ENCODE measurements at regions of chr9 and their contacts with region 1.

Region 1: DNA sequence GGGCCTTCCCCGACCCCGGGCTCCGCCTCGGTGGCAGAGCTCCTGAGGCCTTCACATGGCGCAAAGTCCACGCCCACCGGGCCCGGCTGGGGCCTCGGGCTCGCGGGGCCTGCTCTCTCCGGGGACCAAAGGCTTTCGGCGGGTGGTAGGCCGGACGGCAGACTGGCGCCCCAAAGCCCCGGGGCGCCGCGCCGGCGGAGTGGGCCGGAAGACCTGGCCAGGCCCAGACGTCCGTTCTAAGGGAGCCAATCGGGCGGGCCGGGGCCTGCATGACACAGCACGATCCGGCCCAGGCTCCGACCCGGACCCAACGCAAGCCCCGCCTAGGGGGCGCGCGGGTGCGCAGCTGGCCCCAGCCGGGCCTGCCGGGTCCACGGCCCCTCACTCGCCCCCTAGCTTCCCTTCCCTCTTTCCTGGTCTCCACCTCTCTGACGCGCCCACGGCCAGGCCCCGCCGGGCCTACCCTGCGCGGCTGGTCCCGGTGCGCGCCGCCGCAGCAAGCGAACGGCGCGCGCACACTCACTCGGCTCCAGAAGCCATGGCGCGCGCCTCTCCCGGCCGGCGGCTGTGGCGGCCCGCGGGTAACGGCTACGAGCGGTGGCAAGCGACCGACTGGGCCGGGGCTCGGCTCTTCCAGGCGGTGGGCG is 488 bp downstream of the VCP start:
- H3K4me3 ChIP-seq: peak overlapping the region; percentile 84
- H3K27ac ChIP-seq: peak overlapping the region; percentile 96
- H3K4me1 ChIP-seq: peaks cover 3% of the 10 kb centered on the region; the same call in 1 of the 2 replicates
- CTCF ChIP-seq: peak; percentile 79; the same call in 1 of the 2 replicates

Region 2: GRCh38 chr9:35051069-35051967 is 20.6 kb before region 1 on chr9:
- CTCF ChIA-PET with region 1: interaction called, 18 read pairs
- POLR2A ChIA-PET with region 1: interaction called, 18 read pairs
- H3K4me3 ChIP-seq: no peak overlapping the region
- H3K27ac ChIP-seq: no peak overlapping the region
- H3K4me1 ChIP-seq: no peaks in the 10 kb centered on the region
- CTCF ChIP-seq: no peak

Region 3: DNA sequence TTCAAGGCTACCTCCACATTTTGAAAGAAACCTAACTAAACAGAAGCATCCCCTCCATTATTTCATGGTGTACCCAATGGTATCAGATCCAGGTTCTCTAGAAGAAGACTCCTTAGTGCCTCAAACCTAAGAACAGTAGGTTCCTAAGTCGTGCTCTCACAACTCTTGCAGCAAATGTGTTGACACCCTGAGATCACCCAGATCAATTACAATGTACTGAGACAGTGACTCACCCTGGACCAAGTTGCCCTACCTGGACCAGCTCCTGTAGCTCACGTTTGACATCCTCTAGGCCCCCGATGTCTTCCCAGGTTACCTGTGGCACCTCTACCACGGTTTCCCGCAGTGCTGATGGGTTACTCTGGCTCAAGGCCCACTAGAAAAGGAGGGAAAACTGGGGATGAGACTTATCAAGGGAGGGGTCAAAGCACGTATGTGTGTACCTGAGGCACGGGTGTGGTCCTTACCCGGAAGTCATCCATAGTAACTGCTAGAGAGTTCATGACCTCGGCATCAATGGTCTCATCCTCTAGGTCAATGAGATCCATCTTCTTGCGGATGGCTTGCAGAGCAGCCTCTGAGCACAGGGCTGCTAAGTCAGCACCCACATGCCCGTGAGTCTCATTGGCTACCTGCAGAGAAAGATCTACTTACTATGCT is 11.3 kb before region 1 on chr9:
- CTCF ChIA-PET with region 1: interaction called, 3 read pairs
- POLR2A ChIA-PET with region 1: interaction called, 27 read pairs
- H3K4me3 ChIP-seq: no peak overlapping the region
- H3K27ac ChIP-seq: no peak overlapping the region
- H3K4me1 ChIP-seq: no peaks in the 10 kb centered on the region
- CTCF ChIP-seq: no peak

Region 4: GRCh38 chr9:35096035-35096849 is 24.3 kb after region 1 on chr9 and contains the start of gene PIGO:
- CTCF ChIA-PET with region 1: interaction called, 40 read pairs
- POLR2A ChIA-PET with region 1: interaction called, 21 read pairs
- H3K4me3 ChIP-seq: peak within 1 kb of the TSS; percentile 90
- H3K27ac ChIP-seq: peak within 1 kb of the TSS; percentile 84
- H3K4me1 ChIP-seq: no peaks in the 10 kb centered on the region
- CTCF ChIP-seq: peak; percentile 83

Region 5: DNA sequence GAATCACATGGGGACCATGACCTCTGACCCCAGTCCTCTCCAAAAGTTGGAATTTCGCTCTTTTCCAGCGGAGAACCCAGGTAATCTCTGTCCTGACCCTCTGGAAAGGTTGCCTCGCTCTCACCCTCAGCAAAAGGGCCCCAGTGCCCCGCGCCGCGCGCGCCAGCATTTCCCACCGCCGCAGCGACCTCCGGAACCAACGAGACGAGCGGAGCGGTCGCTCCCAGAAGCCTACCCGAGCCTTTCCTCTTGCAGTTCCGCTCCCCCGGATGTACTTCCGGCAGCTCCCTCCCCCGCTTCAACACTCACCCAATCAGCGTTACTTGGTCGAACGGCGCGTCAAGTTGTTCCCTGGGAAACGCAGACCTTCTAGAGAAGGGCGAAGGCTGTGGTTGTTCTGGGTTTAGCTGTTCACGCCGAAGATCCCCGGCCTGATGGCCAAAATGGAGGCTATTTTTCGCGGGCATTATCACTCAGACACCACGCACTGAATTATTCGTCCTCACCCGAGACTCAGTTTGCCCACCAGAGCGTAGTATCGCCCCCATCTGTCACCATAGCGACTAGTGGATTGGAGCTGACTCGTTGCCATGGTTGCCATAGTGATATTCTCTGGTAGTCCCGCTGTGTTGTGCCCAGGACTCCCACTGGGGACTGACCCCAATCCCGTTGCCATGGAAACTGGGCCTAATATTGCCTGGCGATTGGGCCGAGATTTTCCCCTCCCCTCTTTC is 31.2 kb after region 1 on chr9 and contains the start of gene STOML2:
- CTCF ChIA-PET with region 1: interaction called, 40 read pairs
- POLR2A ChIA-PET with region 1: interaction called, 26 read pairs
- H3K4me3 ChIP-seq: peak within 1 kb of the TSS; percentile 83
- H3K27ac ChIP-seq: peak within 1 kb of the TSS; percentile 66
- H3K4me1 ChIP-seq: no peaks in the 10 kb centered on the region
- CTCF ChIP-seq: no peak